Right cardiac atrium (tissue), 5 donors: ENCODE measurements at regions of chr12 and their contacts with region 1.

Region 1: DNA sequence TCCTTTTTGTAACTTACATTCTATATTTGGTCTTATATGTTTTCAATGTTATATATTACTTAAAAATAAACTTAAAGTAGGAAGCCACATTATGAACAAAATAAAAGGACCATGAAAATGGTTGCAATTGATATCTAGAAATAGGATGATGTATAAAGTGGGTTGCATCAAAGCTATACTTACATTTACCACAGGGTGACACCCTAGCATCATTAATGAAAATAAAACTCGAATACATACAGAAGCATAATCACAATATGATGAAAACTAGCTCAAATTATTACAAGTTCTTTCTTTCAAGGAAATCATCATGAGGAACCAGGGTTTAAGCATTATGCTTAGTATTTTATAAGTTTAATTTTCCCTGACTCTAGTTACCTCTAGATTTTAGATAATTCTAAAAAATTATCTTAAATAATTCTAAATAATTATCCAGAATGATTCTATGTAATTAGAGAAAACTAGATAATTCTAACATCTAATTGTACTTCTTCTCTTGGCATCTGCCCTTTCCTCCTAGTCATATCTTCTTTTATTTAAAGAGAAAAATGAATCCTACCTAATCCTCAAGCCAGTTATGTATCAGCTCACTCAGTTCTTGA is 31.2 kb downstream of the TAS2R7 start:
- DNase-seq: no peak
- ATAC-seq: peak; percentile 47 to 54
- H3K4me3 ChIP-seq: no peak overlapping the region
- H3K27ac ChIP-seq: no peak overlapping the region
- H3K4me1 ChIP-seq: no peaks in the 10 kb centered on the region
- H3K27me3 ChIP-seq: no peaks in the 10 kb centered on the region

Region 2: GRCh38 chr12:11202811-11203210 is 431.6 kb after region 1 on chr12:
- intact Hi-C with region 1: loop called (anchors 5 kb)
- DNase-seq: no peak
- ATAC-seq: no peak
- H3K4me3 ChIP-seq: no peak overlapping the region
- H3K27ac ChIP-seq: no peak overlapping the region
- H3K4me1 ChIP-seq: no peaks in the 10 kb centered on the region
- H3K27me3 ChIP-seq: no peaks in the 10 kb centered on the region